IMR-90 (cell line): ENCODE measurements at regions of chr15 and their contacts with region 1.

Region 1: DNA sequence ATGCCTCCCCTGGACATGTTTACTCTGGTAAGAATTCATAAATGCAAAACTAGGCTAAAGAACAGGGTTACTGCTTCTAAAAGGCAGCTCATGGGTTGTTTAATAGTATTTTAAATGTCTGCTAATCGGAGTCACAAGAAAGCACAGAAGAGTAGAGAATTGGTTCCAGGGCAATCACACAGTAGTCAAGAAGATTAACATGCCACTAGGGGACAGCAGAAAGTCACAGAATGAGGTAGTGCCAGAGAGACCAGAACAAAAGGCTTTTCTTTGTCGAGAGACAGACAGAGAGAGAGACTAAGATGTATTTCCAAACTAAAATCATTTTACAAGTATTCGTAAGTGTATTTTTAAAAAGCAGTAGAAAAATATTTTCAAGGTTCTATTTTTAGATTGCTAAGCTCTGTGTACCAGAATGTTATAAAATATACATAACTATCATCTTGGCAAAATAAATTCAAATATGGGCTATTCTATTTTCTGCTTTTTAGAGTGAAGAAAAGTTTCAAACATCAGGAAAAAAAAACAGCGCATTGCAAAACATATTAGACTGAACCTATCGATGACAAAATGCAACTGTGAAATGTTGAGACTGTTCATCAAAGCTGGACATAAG is 78.3 kb upstream of the CDIN1 start:
- DNase-seq: peak; percentile 79
- ATAC-seq: peak; percentile 89
- H3K4me3 ChIP-seq: no peak overlapping the region
- H3K27ac ChIP-seq: no peak overlapping the region
- H3K4me1 ChIP-seq: peaks cover 5% of the 10 kb centered on the region
- H3K27me3 ChIP-seq: no peaks in the 10 kb centered on the region
- CTCF ChIP-seq: peak; percentile 79
- POLR2A ChIP-seq: peak; percentile 28; the same call in 1 of the 2 replicates
- RAD21 ChIP-seq: peak; percentile 90

Region 2: GRCh38 chr15:35545824-35546510 is 955.2 kb before region 1 on chr15 and contains the start of gene DPH6:
- CTCF ChIA-PET with region 1: no interaction called
- POLR2A ChIA-PET with region 1: no interaction called
- dilution Hi-C with region 1: no loop called
- in situ Hi-C with region 1: loop called (anchors 25 kb)
- intact Hi-C with region 1: no loop called
- DNase-seq: peak; percentile 79
- ATAC-seq: peak; percentile 94
- H3K4me3 ChIP-seq: peak within 1 kb of the TSS; percentile 79
- H3K27ac ChIP-seq: peak within 1 kb of the TSS; percentile 96
- H3K4me1 ChIP-seq: peaks cover 2% of the 10 kb centered on the region; the same call in 1 of the 2 replicates
- H3K27me3 ChIP-seq: no peaks in the 10 kb centered on the region
- CTCF ChIP-seq: no peak
- POLR2A ChIP-seq: peak; percentile 79
- RAD21 ChIP-seq: no peak
- total RNA-seq, gene DPH6: 8.1 and 21.4 TPM in 2 replicates

Region 3: GRCh38 chr15:36075333-36075732 is 425.8 kb before region 1 on chr15:
- CTCF ChIA-PET with region 1: no interaction called
- POLR2A ChIA-PET with region 1: no interaction called
- dilution Hi-C with region 1: no loop called
- in situ Hi-C with region 1: no loop called
- intact Hi-C with region 1: no loop called
- DNase-seq: peak; percentile 30
- ATAC-seq: no peak
- H3K4me3 ChIP-seq: no peak overlapping the region
- H3K27ac ChIP-seq: no peak overlapping the region
- H3K4me1 ChIP-seq: no peaks in the 10 kb centered on the region
- H3K27me3 ChIP-seq: no peaks in the 10 kb centered on the region
- CTCF ChIP-seq: no peak
- POLR2A ChIP-seq: no peak
- RAD21 ChIP-seq: no peak

Region 4: DNA sequence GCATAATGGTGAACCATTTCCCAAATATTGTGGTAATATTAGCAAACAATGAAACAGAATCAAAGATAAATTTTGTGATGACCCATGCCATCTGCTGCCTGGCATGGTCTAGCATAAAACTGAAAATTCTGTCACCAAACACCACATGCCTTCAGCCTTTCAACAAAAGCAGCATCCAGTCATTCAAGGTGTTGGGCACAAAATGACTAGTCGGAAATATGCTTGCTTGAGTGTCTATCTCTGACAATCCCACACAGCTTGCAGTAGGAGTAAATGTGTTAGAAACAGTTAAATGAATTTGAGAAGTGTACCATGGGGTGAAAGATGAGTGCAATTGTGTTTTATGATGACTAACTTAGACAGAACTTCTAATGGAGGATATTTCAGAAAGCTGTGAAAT is 16.6 kb after region 1 on chr15:
- CTCF ChIA-PET with region 1: no interaction called
- POLR2A ChIA-PET with region 1: no interaction called
- dilution Hi-C with region 1: no loop called
- in situ Hi-C with region 1: no loop called
- intact Hi-C with region 1: no loop called
- DNase-seq: no peak
- ATAC-seq: no peak
- H3K4me3 ChIP-seq: no peak overlapping the region
- H3K27ac ChIP-seq: no peak overlapping the region
- H3K4me1 ChIP-seq: no peaks in the 10 kb centered on the region
- H3K27me3 ChIP-seq: no peaks in the 10 kb centered on the region
- CTCF ChIP-seq: no peak
- POLR2A ChIP-seq: no peak
- RAD21 ChIP-seq: no peak

Region 5: DNA sequence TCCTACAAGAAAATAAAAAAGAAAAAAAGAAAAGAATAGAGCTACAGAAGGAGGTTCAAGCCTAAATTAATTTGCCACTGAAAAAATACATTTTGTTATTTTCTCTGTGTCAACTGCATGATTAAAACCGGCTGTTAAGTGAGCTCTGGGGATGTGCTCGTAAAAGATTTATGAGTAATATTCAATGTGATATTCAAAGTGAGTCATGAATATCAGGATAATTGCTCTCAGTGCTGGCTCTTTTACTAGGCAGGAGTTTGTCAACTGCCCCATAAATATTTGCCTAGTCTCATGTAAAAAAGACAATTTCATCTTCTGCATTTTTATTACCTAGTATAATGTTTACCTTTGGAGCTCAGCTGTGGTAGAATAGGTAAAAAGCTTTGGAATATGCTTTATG is 157.1 kb after region 1 on chr15:
- CTCF ChIA-PET with region 1: no interaction called
- POLR2A ChIA-PET with region 1: no interaction called
- dilution Hi-C with region 1: no loop called
- in situ Hi-C with region 1: no loop called
- intact Hi-C with region 1: loop called (anchors 10 kb)
- DNase-seq: peak; percentile 17
- ATAC-seq: no peak
- H3K4me3 ChIP-seq: no peak overlapping the region
- H3K27ac ChIP-seq: no peak overlapping the region
- H3K4me1 ChIP-seq: no peaks in the 10 kb centered on the region
- H3K27me3 ChIP-seq: no peaks in the 10 kb centered on the region
- CTCF ChIP-seq: no peak
- POLR2A ChIP-seq: no peak
- RAD21 ChIP-seq: no peak

Region 6: DNA sequence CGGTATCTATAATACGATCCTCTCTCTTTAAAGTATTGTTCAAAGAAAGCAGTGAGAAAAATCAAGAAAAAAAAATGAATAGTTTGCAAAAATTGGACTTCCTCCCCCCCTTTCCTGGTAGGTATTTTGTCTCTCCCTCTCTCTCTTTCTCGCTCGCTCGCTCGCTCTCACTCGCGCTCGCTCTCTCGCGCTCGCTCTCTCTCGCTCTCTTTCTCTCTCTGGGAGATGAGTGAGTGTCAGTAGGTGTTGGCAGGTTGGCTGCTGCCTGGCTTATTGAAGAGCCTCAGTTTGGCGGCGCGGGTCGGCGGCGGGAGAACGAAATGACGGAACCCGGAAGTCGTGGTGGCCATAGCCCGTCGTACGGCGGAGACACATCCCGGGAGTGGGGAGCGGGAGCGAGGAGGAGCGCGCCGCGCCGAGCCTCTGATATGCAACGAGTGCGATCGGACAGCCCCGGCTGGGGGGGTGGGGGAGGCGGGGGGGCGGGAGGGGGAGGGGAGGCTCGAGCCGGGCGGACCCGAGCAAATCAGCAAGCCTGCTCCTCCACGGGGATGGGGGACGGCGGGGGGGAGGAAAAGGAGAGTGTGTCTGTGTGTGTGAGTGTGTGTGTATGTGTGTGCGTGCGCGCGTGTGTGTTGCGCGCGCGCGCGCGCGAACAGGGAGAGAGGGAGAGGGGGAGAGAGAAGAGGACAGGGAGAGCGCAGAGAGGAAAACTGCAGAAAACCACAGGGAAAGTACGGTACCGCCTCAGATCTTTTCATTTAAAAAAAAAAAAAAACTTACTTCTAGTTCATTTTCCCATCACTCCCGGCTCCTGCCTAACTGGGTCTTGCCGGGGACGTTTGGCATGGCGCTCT is 599.2 kb after region 1 on chr15 and contains the start of gene MEIS2:
- CTCF ChIA-PET with region 1: no interaction called
- POLR2A ChIA-PET with region 1: no interaction called
- dilution Hi-C with region 1: no loop called
- in situ Hi-C with region 1: no loop called
- intact Hi-C with region 1: loop called (anchors 10 kb)
- DNase-seq: peak; percentile 96
- ATAC-seq: peak; percentile 52
- H3K4me3 ChIP-seq: peak within 1 kb of the TSS; percentile 94
- H3K27ac ChIP-seq: peak within 1 kb of the TSS; percentile 99
- H3K4me1 ChIP-seq: peaks cover 3% of the 10 kb centered on the region
- H3K27me3 ChIP-seq: no peaks in the 10 kb centered on the region
- CTCF ChIP-seq: no peak
- POLR2A ChIP-seq: peak; percentile 77
- RAD21 ChIP-seq: no peak
- total RNA-seq, gene MEIS2: 50.3 and 71.3 TPM in 2 replicates

Region 7: GRCh38 chr15:37891766-37892368 is 1390.7 kb after region 1 on chr15:
- CTCF ChIA-PET with region 1: no interaction called
- POLR2A ChIA-PET with region 1: no interaction called
- dilution Hi-C with region 1: no loop called
- in situ Hi-C with region 1: loop called (anchors 25 kb)
- intact Hi-C with region 1: no loop called
- DNase-seq: peak; percentile 70
- ATAC-seq: peak; percentile 99
- H3K4me3 ChIP-seq: no peak overlapping the region
- H3K27ac ChIP-seq: no peak overlapping the region
- H3K4me1 ChIP-seq: peaks cover 2% of the 10 kb centered on the region; the same call in 1 of the 2 replicates
- H3K27me3 ChIP-seq: no peaks in the 10 kb centered on the region
- CTCF ChIP-seq: peak; percentile 88
- POLR2A ChIP-seq: no peak
- RAD21 ChIP-seq: peak; percentile 88